Heart left ventricle (tissue), 16 donors: ENCODE measurements at regions of chr2 and their contacts with region 1.

Region 1: GRCh38 chr2:9152975-9153642 is 53.5 kb upstream of the ASAP2 start:
- DNase-seq: no peak
- ATAC-seq: peak; percentile 39 to 59 (median 45)
- H3K4me3 ChIP-seq: no peak overlapping the region
- H3K27ac ChIP-seq: no peak overlapping the region
- H3K4me1 ChIP-seq: peaks cover 0 to 12% (median 0%) of the 10 kb centered on the region in 12 donors
- H3K27me3 ChIP-seq: no peaks in the 10 kb centered on the region
- CTCF ChIP-seq: no peak
- POLR2A ChIP-seq: no peak

Region 2: DNA sequence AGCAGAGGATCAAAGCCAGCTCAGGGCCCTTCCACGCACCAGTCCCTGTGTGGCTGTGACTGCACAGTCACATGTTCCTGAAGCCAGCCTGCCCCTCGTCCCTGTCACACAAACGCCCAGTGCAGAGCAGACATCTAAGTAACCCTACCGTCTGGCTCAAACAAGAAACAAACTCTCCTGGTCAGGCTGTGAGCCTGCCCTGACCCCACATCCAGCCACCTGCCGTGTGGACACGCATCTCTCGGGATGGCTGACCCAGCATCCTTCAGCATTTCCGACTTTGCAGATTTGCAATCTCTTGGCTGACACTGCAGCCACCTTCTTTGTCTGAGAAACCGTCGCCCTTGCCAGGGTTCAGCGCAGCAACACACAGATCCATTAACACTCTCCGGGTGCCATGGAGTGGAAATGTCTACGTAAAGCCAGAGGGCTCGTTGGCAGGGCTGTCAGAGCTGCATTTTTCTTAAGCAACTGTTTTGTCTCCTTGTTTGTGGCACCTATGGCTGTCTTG is 28.8 kb before region 1 on chr2:
- intact Hi-C with region 1: no loop called
- DNase-seq: no peak
- ATAC-seq: peak; percentile 20 to 75 (median 51)
- H3K4me3 ChIP-seq: no peak overlapping the region
- H3K27ac ChIP-seq: no peak overlapping the region
- H3K4me1 ChIP-seq: no peaks in the 10 kb centered on the region
- H3K27me3 ChIP-seq: no peaks in the 10 kb centered on the region
- CTCF ChIP-seq: no peak
- POLR2A ChIP-seq: no peak

Region 3: GRCh38 chr2:9191041-9191481 is 38.0 kb after region 1 on chr2:
- intact Hi-C with region 1: loop called in 1 of 10 experiments (anchors 5 kb)
- DNase-seq: peak; percentile 69 to 92 (median 84)
- ATAC-seq: peak; percentile 90 to 96 (median 93)
- H3K4me3 ChIP-seq: no peak overlapping the region
- H3K27ac ChIP-seq: peak overlapping the region; percentile 48 to 88 (median 76)
- H3K4me1 ChIP-seq: peaks cover 0 to 35% (median 13%) of the 10 kb centered on the region in 12 donors
- H3K27me3 ChIP-seq: no peaks in the 10 kb centered on the region
- CTCF ChIP-seq: no peak
- POLR2A ChIP-seq: no peak

Region 4: GRCh38 chr2:9347411-9347881 is 194.3 kb after region 1 on chr2:
- intact Hi-C with region 1: no loop called
- DNase-seq: peak in 4 of 5 donors; percentile 31 to 72 (median 48)
- ATAC-seq: peak; percentile 73 to 96 (median 84)
- H3K4me3 ChIP-seq: peak overlapping the region in 1 of 12 donors; percentile 3
- H3K27ac ChIP-seq: peak overlapping the region; percentile 12 to 72 (median 55)
- H3K4me1 ChIP-seq: peaks cover 0 to 28% (median 13%) of the 10 kb centered on the region in 12 donors
- H3K27me3 ChIP-seq: no peaks in the 10 kb centered on the region
- CTCF ChIP-seq: no peak
- POLR2A ChIP-seq: no peak

Region 5: GRCh38 chr2:9843229-9844035 is 690.3 kb after region 1 on chr2 and contains the start of gene TAF1B:
- intact Hi-C with region 1: no loop called
- DNase-seq: peak; percentile 87 to 92 (median 88)
- ATAC-seq: peak; percentile 87 to 98 (median 96)
- H3K4me3 ChIP-seq: peak within 1 kb of the TSS; percentile 42 to 97 (median 71)
- H3K27ac ChIP-seq: peak within 1 kb of the TSS in 11 of 12 donors; percentile 69 to 96 (median 82)
- H3K4me1 ChIP-seq: peaks cover 0 to 38% (median 8%) of the 10 kb centered on the region in 12 donors
- H3K27me3 ChIP-seq: no peaks in the 10 kb centered on the region
- CTCF ChIP-seq: peak in 9 of 12 donors; percentile 6 to 74 (median 35)
- POLR2A ChIP-seq: peak in 1 of 2 donors; percentile 73
- total RNA-seq, gene TAF1B: 3.8 to 13.9 (median 5.2) TPM

Region 6: DNA sequence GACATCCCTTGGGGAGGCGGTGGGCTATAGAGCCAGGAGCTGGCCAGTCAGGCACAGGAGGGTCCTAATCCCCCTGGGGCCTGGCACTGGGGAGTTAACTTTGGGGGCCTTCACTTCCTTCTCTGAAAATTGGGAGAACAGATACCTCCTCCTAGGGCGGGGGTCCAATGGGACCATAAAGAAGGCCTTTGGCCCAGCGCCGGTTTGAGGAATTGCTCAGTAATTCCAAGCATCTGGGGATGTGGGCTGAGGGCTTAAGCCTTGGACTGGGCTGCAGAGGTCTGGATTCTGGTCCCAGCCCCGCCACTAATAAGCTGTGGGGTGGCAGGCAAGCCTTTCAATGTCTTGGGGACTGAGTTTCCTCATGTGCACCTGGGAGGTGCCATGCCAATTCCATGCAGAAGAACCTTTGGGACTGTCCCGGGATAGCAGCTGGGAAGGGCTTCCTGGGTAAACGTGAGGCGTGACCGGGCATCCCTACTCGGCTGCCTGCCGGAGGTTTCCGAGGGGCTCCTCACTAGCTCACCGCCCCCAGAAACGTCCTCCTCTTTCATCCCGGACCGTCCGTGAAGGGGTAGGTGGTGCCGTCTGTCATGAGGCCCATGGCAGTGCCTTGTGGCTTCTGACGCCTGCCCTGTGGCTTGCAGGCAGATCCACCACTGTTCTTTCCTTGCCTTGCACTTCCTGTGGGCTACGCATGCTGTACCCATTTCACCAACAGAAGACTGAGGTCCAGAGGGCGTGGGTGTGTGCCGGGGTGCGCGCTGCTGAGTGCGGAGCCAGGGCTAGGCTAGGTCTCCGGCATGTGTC is 1082.2 kb after region 1 on chr2:
- intact Hi-C with region 1: no loop called
- DNase-seq: peak in 1 of 5 donors; percentile 50
- ATAC-seq: no peak
- H3K4me3 ChIP-seq: no peak overlapping the region
- H3K27ac ChIP-seq: peak overlapping the region in 1 of 12 donors; percentile 24
- H3K4me1 ChIP-seq: peaks cover 0 to 36% (median 23%) of the 10 kb centered on the region in 12 donors
- H3K27me3 ChIP-seq: no peaks in the 10 kb centered on the region
- CTCF ChIP-seq: no peak
- POLR2A ChIP-seq: no peak